ENCODE measurements at regions of chr6 and their contacts with region 1.

Region 1: GRCh38 chr6:151390276-151391032 is 905 bp downstream of the ZBTB2 start:
- DNase-seq: peak; percentile 88 to 100 (median 95)

Region 2: GRCh38 chr6:151451950-151452749 is 61.7 kb after region 1 on chr6 and contains the start of gene RMND1:
- intact Hi-C with region 1: loop called (anchors 1 kb)
- DNase-seq: peak; percentile 99 to 100 (median 99)

Region 3: DNA sequence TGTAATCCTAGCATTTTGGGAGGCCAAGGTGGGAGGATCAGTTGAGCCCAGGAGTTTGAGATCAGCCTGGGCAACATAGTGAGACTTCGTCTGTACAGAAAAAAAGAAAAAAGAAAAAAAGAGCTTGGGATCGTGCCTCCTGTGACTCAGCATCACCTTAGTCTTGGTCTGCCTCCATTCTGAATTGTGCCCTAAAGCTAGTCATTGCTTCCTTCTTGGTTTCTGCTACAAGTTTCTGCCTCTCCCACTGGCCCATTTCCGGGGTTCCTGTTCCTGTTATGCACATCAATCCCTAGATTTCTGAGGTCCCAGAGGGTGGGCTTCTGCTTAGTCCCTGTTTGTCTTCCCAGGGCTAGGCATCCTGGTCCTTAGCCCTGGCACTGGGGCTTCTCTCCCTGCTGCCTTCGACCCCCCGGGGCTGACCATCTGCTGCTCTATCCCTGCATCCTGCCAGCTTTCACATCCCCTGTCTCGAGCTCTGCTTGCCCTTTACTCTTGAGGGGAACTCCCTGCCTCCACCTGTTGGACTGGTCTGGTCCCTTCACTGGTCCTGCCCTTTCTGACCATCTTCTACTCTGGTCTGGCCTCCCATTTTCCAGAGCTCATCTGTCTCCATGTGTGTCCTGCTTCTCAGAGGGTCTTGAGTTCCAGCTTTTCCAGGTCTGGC is 339.5 kb after region 1 on chr6:
- intact Hi-C with region 1: no loop called
- DNase-seq: peak in 1 of 10 donors; percentile 72

Measured in posterior cingulate gyrus (tissue), 11 donors.